Activated naive CD8-positive, alpha-beta T cell treated with anti-CD3 and anti-CD28 coated beads, Interleukin-2, amount 10 ng/mL, durations not matched to agents 7 days and 5 days (primary cell): ENCODE measurements at regions of chrX and their contacts with region 1.

Region 1: DNA sequence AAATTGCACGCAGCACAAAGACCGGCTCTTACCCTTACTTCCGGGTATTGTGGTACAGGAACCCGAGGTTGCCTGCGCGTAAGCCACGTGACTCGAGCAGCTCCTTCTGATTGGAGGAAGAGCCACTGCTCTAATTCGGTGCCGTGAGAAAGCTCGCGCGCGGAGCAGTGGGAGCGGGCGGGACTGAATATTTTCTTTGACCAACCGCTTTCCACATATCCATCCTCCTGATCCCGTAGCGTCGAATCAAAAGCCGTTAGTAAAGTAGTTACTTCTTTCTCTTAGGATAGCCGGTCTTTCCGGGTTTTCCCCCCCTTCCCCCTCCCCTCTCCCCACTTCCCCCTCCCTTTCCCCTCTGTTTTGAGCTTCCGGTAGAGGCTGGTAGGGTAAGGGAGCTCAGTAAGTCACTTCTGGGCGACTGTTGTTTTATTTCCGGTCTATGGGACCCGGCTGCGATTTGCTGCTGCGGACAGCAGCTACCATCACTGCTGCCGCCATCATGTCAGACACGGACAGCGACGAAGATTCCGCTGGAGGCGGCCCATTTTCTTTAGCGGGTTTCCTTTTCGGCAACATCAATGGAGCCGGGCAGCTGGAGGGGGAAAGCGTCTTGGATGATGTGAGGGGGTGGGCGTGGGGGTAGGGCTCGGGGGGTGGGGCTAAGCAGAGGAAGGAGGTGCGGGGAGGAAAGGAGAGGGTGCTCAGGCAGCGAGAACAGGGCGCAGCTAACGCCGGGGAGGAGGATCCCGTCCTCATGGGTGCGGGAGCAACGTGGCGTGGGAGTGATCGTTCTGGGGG is at the start of gene TAF1:
- DNase-seq: peak; percentile 81
- ATAC-seq: peak; percentile 93
- H3K4me3 Mint-ChIP-seq: peak within 1 kb of the TSS; percentile 97
- H3K27ac Mint-ChIP-seq: peak within 1 kb of the TSS; percentile 98
- H3K4me1 Mint-ChIP-seq: peaks cover 13% of the 10 kb centered on the region
- H3K27me3 Mint-ChIP-seq: no peaks in the 10 kb centered on the region
- total RNA-seq, gene TAF1: 64.7 to 66.8 TPM

Region 2: GRCh38 chrX:71198066-71198465 is 168.0 kb before region 1 on chrX:
- POLR2A ChIA-PET with region 1: interaction called, 14 read pairs
- DNase-seq: no peak
- ATAC-seq: peak; percentile 47
- H3K4me3 Mint-ChIP-seq: peak overlapping the region; percentile 84
- H3K27ac Mint-ChIP-seq: peak overlapping the region; percentile 95
- H3K4me1 Mint-ChIP-seq: peaks cover 10% of the 10 kb centered on the region
- H3K27me3 Mint-ChIP-seq: no peaks in the 10 kb centered on the region

Region 3: DNA sequence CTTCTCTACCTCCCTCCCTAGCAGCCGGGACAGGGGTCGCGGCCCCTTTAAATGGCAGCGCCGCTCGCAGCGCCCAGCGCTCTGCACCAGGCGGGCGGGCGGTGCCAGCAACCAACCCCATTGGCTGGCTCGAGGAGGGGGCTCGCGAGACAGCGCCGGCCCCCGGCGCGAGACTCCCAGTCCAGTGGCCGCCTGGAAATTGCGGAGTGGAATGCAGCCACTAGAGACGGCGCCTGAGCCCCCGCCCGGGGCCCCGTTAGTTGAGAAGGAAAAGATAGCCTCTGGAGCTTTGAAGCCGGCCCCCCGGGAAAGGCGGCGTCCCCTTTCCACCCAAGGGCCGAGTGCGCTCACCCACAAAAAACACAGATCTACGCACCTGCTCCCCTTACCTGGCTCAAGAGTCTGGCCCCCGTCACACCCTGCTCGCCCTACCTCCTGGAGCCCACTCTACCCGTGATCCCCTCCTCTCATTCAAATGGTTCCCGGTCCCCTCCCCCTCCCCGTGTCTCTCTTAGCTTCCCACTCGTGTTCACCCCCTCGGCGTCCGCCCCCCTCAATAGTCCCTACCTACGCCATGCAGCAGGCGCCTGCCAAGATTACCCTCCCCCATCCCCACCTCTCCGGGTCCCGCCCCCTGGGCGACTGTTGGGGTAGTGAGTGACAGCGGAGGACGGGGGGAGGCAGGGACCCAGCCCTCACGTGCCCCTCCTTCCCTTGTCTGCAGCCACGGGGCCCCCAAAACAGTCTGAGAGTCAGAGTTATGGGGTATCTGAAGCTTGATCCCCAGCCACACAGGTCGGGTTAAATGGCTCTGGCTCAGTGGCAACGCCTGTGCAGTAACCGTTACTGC is 111.8 kb before region 1 on chrX and contains the start of gene ZMYM3:
- POLR2A ChIA-PET with region 1: interaction called, 23 read pairs
- DNase-seq: peak; percentile 79
- ATAC-seq: peak; percentile 90
- H3K4me3 Mint-ChIP-seq: peak within 1 kb of the TSS; percentile 90
- H3K27ac Mint-ChIP-seq: peak within 1 kb of the TSS; percentile 94
- H3K4me1 Mint-ChIP-seq: peaks cover 18% of the 10 kb centered on the region
- H3K27me3 Mint-ChIP-seq: no peaks in the 10 kb centered on the region
- total RNA-seq, gene ZMYM3: 38.9 to 39.3 TPM